Mucosa of descending colon (tissue), 3 donors: ENCODE measurements at regions of chr21 and their contacts with region 1.

Region 1: DNA sequence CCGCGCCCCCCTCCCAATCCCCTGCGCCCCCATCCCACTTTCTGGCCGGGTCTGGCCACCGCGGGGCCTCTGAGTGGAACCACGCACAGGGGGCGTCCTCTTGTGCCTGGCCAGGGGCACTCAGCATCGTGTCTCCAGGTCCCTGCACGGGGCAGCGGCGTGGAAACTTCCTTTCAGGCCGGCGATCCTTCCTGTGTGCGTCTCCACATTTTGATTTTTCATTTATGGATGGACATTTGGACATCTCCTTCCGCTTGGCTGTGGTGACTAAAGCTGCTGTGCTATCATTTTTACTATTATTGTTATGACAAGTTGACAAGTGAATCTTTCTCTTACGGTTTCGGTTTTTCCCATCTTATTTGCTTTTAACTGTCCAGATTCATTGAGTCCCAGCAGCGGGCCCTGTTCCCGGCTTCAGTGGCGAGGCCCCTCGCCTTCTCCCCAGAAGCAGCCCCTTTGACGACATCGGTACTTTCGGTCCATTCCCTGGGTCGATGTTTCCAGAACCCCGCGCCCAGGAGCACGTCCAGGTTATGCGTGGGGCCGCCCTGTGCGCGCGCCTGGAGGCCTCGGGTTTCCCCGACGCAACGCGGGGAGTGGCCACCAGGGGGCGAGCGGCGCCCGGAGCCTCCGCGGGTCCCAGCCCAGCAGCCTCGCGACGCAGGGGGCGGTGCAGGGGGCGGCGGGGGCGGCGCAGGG is 12.4 kb upstream of the SLC19A1 start:
- DNase-seq: peak; percentile 88 to 91 (median 88)
- ATAC-seq: peak; percentile 85
- H3K4me3 ChIP-seq: peak overlapping the region; percentile 9
- H3K4me1 ChIP-seq: no peaks in the 10 kb centered on the region
- CTCF ChIP-seq: peak; percentile 77

Region 2: GRCh38 chr21:45596704-45597318 is 42.2 kb after region 1 on chr21:
- intact Hi-C with region 1: loop called in 1 of 2 experiments (anchors 5 kb)
- DNase-seq: peak; percentile 74 to 90 (median 83)
- ATAC-seq: peak; percentile 88
- H3K4me3 ChIP-seq: no peak overlapping the region
- H3K4me1 ChIP-seq: no peaks in the 10 kb centered on the region
- CTCF ChIP-seq: peak; percentile 79

Region 3: DNA sequence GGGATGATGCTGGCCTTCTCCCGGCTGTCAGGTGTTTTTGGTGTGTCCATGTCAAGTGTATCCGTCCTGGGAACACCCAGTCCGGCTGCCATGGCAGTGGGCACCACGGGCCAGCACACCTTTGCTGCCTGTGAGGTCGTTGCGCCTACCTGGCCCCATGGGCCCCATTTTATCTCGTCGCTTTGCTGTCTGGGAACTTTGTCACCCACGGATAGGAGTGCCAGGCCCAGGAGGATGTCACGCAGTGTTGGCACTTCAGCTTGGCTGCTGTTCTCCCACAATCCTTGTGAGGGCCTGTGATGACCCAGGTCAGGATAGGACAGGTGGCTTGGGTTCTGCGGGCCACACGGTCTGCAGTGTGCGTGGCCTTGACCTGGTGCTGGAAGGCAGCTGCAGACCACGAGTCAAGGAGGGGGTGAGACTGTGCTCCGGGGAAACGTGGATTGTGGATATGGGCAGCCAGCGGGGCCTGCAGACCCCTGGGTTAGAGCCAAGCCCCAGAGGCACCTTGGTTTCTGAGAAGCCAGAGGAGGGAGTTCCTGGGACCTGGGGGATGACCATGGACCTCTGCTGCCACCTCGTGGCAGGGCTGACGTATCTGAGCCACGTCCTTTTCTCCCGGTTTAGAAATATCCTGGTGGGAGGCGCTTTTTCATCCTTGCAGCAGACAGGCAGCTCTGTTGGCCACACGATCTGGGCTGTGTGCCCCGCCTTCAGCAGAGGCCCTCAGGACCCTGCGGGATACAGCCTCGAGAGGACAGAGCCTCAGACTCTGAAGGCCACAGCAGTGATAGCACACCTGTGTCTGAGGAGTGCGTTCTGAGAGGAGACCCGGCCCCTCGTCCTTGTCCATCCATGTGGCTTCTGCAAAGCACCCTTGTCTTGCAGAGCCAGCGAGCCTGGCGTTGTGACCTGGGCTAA is 265.8 kb after region 1 on chr21:
- intact Hi-C with region 1: loop called in 1 of 2 experiments (anchors 10 kb)
- DNase-seq: peak; percentile 74 to 83 (median 82)
- ATAC-seq: peak; percentile 89
- H3K4me3 ChIP-seq: no peak overlapping the region
- H3K4me1 ChIP-seq: no peaks in the 10 kb centered on the region
- CTCF ChIP-seq: peak; percentile 78